Right ventricle myocardium superior (tissue), 1 donor: ENCODE measurements at regions of chr20 and their contacts with region 1.

Region 1: DNA sequence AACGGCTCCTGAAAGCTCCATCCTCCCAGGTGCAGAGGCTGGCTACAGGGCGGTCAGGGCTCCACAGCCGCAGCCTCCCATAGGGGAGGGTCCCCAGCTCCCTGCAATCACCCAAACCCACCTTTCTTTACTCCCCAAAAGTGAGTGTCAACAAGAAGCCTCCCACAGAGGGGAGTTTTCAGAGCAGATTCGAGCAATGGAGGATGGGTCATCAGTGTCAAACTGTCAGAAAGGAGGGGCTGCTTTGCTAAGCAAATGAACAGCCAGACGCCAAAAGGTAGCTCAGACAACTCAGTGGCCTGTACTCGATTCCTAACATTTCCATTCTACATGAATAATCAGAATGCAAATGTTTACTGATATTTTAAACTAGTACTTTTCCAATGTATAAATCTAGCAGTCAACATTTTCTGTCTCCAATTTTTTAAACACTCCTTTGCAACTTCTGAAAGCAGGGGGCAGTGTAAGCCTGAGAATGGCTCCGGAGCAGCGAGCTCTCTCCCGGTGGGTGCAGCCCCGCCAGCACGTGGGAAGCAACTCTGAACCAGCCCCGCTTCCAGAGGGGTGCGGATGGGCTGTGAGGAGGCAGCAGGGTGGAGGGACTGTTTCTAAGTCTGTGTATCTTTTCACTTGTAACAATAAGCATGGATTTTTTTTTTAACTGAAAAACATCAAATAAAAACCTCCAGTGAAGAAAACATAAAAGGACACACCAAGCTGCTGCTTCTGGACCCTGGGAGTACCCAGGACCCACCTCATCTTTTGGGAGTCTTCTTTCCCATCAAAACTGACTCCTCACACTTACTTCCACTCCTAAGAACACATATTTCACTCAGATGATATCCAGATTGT is 54.9 kb downstream of the TAF4 start:
- DNase-seq: peak; percentile 62
- ATAC-seq: peak; percentile 69

Region 2: DNA sequence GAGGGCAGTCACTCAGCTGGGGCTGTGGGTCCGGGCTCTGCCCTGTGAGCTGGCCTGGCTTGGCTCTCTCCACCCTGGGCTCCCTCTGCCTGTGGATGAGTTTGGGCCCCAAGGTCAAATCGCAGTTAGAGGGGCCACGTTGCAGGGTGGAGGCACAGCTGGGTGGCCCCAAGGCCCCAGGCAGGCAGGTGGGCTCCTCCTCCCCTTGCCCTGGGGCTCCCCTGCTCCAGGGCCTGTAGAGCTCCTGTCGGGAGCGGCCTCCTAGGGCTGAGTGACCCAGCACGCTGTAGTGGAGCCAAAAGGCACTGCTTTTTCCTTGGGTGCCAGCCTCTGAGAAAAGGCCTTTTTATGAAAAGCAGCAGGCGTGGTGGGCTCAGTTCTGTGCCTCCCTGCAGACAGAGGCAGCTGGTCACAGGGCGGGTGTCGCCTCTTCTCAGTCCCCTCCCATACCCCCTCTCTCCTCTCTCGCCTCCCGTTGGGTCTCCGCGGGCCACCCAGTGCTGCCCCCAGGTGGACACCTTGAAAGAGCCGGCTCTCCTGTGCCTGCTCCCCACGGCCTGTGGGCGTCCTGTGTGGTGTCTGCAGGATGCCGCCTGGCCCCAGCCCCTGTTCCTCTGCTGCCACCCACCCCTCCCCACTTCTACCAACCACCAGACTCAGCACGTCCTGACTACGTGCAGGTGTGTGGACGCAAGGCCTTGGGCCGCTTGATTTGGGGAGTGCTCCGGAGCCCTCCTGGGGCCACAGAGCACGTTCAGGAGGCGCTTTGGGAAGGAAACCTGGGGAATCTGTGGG is 146.0 kb after region 1 on chr20:
- intact Hi-C with region 1: loop called (anchors 5 kb)
- DNase-seq: peak; percentile 77
- ATAC-seq: peak; percentile 89